Heart left ventricle (tissue), 16 donors: ENCODE measurements at regions of chr7 and their contacts with region 1.

Region 1: GRCh38 chr7:29352062-29352461 is 157.5 kb downstream of the CHN2 start:
- DNase-seq: no peak
- ATAC-seq: peak in 2 of 4 donors; percentile 15 to 52
- H3K4me3 ChIP-seq: no peak overlapping the region
- H3K27ac ChIP-seq: no peak overlapping the region
- H3K4me1 ChIP-seq: peaks cover 0 to 6% (median 0%) of the 10 kb centered on the region in 12 donors
- H3K27me3 ChIP-seq: no peaks in the 10 kb centered on the region
- CTCF ChIP-seq: no peak
- POLR2A ChIP-seq: no peak

Region 2: GRCh38 chr7:29325492-29325891 is 26.6 kb before region 1 on chr7:
- intact Hi-C with region 1: loop called in 1 of 10 experiments (anchors 2 kb)
- DNase-seq: no peak
- ATAC-seq: no peak
- H3K4me3 ChIP-seq: no peak overlapping the region
- H3K27ac ChIP-seq: no peak overlapping the region
- H3K4me1 ChIP-seq: peaks cover 0 to 34% (median 2%) of the 10 kb centered on the region in 12 donors
- H3K27me3 ChIP-seq: no peaks in the 10 kb centered on the region
- CTCF ChIP-seq: no peak
- POLR2A ChIP-seq: no peak